ENCODE measurements at regions of chr9 and their contacts with region 1.

Region 1: GRCh38 chr9:137176302-137177182 is 4.7 kb upstream of the TMEM210 start:
- DNase-seq: peak; percentile 48
- ATAC-seq: peak; percentile 60
- H3K4me3 Mint-ChIP-seq: no peak overlapping the region
- H3K27ac Mint-ChIP-seq: peak overlapping the region; percentile 49
- H3K4me1 Mint-ChIP-seq: no peaks in the 10 kb centered on the region
- H3K27me3 Mint-ChIP-seq: peaks cover 5% of the 10 kb centered on the region
- CTCF ChIP-seq: peak; percentile 21; the same call in 1 of the 2 replicates

Region 2: DNA sequence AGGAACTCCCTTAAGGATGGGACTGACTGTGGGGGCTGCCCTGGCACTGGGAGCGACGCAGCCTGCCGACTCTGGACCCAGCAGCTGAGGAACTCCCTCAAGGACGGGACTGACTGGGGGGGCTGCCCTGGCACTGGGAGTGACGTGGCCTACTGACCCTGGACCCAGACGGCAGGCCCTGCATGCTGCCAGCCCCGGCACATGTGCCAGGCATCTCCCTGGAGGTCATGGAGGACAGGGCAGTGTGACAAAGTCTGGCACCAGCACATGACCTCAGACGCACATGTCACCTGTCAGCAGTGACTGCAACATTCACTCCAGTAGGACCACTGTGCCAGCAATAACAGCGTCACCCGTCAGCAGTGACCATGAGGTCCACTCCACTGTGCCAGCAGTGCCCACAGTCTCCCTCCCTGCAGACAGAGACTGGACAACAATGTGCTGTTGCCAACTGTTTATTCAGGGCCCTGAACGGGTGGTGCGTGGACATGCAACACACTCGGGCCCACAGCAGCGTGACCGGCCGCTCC is 236.5 kb before region 1 on chr9:
- CTCF ChIA-PET with region 1: no interaction called
- POLR2A ChIA-PET with region 1: no interaction called
- DNase-seq: no peak
- ATAC-seq: no peak
- H3K4me3 Mint-ChIP-seq: no peak overlapping the region
- H3K27ac Mint-ChIP-seq: no peak overlapping the region
- H3K4me1 Mint-ChIP-seq: peaks cover 6% of the 10 kb centered on the region
- H3K27me3 Mint-ChIP-seq: no peaks in the 10 kb centered on the region
- CTCF ChIP-seq: no peak

Region 3: DNA sequence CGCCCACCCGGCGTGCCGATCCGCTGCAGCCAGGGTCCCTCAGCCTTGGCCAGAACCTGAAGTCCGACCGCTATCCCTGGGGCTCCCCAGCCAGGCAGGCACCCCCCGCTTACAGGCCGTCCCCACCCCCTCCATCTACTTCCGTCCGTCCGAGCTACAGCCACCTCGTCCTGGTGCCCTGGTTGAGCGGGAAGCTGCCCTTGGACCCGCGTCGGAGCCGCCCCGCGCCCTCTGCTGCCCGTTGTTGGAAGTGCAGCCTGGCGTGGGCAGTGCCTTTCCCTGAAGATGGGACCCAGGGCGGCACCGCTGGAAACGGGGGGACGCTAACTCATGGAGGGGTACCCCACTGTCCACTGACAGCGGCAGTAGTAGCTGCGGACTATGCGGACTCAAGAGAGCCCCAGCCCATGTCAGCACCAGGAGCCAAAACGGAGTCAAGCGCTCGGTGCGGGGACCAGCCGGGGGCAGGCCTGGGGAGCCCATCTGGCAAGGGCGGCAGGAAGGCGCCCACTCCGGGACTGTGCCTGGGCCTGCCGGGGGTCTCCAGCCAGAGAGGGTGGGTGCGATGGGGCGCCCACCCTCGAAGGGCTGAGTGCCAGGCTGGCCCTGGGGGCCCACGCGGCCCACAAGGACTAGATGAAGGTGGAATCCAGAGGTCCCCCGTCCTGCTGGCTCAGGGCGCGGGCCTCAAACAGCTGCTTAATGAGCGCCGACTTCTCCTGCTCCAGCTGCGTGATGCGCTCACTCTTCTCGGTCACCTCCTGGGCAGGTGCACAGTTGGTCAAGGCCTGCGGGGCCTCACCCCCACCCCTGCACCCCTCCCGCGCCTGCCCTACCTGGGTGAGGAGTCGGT is 112.3 kb before region 1 on chr9:
- CTCF ChIA-PET with region 1: interaction called, 18 read pairs
- POLR2A ChIA-PET with region 1: no interaction called
- DNase-seq: peak; percentile 84
- ATAC-seq: peak; percentile 51
- H3K4me3 Mint-ChIP-seq: no peak overlapping the region
- H3K27ac Mint-ChIP-seq: no peak overlapping the region
- H3K4me1 Mint-ChIP-seq: peaks cover 12% of the 10 kb centered on the region
- H3K27me3 Mint-ChIP-seq: peaks cover 6% of the 10 kb centered on the region
- CTCF ChIP-seq: peak; percentile 99

Region 4: GRCh38 chr9:137077010-137077747 is 99.4 kb before region 1 on chr9 and contains the start of gene UAP1L1:
- CTCF ChIA-PET with region 1: no interaction called
- POLR2A ChIA-PET with region 1: no interaction called
- DNase-seq: peak; percentile 64
- ATAC-seq: peak; percentile 29
- H3K4me3 Mint-ChIP-seq: peak within 1 kb of the TSS; percentile 69
- H3K27ac Mint-ChIP-seq: no peak within 1 kb of the TSS
- H3K4me1 Mint-ChIP-seq: peaks cover 16% of the 10 kb centered on the region
- H3K27me3 Mint-ChIP-seq: peaks cover 36% of the 10 kb centered on the region
- CTCF ChIP-seq: no peak
- total RNA-seq, gene UAP1L1: 12.1 to 17.7 TPM (median 14.3 TPM) in 3 replicates

Region 5: DNA sequence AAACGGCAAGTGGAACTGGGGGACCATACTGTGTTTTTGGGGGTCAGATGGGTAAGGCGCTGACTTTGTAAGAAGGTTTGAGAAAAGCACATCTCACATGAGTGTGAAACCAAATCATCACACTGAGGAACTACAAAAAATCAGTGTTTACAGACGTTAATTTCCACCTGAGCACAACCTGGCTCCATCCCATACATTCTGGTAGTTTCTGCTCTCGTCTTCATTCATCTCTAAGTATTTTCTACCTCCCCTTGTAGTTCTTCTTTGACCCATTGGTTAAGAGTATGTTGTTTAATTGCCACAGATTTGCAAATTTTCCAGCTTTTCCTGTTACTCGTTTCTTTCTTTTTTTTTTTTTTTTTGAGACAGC is 53.1 kb before region 1 on chr9:
- CTCF ChIA-PET with region 1: interaction called, 14 read pairs
- POLR2A ChIA-PET with region 1: no interaction called
- DNase-seq: no peak
- ATAC-seq: no peak
- H3K4me3 Mint-ChIP-seq: no peak overlapping the region
- H3K27ac Mint-ChIP-seq: no peak overlapping the region
- H3K4me1 Mint-ChIP-seq: peaks cover 9% of the 10 kb centered on the region
- H3K27me3 Mint-ChIP-seq: no peaks in the 10 kb centered on the region; the same call in 1 of the 2 replicates
- CTCF ChIP-seq: no peak

Region 6: DNA sequence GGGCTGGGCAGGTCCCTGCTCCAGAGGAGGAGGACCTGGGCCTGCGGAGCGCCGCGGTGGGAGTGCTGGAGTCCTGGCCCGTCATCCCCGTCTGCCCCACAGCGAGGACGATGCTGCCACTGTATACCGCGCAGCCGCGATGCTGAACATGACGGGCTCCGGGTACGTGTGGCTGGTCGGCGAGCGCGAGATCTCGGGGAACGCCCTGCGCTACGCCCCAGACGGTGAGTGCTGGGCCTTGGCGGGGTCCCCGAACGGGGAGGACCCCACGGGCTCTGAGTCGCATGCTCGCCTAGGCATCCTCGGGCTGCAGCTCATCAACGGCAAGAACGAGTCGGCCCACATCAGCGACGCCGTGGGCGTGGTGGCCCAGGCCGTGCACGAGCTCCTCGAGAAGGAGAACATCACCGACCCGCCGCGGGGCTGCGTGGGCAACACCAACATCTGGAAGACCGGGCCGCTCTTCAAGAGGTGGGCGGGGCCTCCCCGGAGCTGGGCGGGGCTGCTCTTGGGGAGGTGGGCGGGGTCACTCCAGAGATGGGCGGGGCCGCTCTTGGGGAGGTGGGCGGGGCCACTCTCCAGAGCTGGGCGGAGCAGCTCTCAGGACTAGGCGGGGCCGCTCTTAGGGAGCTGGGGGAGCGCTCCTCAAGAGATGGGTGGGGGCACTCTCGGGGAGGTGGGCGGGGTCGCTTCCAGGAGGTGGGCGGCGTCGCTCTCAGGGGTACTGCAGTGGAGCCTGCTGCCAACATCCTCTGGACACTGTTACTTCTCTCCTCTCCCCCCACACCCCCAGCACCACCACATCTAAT is 19.8 kb before region 1 on chr9:
- CTCF ChIA-PET with region 1: interaction called, 40 read pairs
- POLR2A ChIA-PET with region 1: interaction called, 6 read pairs
- DNase-seq: peak; percentile 75
- ATAC-seq: peak; percentile 72
- H3K4me3 Mint-ChIP-seq: peak overlapping the region; percentile 64
- H3K27ac Mint-ChIP-seq: no peak overlapping the region
- H3K4me1 Mint-ChIP-seq: no peaks in the 10 kb centered on the region
- H3K27me3 Mint-ChIP-seq: peaks cover 66% of the 10 kb centered on the region
- CTCF ChIP-seq: no peak

Region 7: DNA sequence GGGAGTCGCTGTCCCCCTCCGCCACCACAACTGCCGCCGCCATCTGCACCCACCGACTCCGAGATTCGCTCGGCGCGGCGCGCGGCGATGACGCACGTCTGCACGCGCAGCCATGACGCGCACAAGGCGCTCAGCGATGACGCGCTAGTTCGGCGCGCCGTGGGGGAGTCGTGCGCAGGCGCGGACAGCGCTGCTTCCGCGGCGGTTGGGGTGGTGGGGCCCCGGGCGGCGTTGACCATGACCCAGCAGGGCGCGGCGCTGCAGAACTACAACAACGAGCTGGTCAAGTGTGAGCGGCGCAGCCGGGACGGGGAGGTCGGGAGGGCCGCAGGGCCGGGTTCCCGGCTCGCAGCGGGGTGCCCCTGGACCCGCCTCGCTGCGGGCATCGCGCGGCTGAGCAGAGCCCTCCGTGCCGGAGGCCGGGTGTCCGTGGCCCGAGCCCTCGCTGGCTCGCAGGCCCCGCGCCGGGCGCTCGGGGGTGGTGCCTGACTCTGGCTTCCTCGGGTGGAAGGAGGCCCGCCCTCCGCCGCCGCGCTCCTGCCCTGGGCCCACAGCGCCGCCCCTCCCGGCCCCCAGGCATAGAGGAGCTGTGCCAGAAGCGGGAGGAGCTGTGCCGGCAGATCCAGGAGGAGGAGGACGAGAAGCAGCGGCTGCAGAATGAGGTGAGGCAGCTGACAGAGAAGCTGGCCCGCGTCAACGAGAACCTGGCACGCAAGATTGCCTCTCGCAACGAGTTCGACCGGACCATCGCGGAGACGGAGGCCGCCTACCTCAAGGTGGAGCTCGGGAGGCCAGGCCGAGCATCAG is 12.2 kb after region 1 on chr9 and contains the starts of genes ANAPC2 and SSNA1:
- CTCF ChIA-PET with region 1: interaction called, 24 read pairs
- POLR2A ChIA-PET with region 1: interaction called, 3 read pairs
- DNase-seq: peak; percentile 92
- ATAC-seq: peak; percentile 84
- H3K4me3 Mint-ChIP-seq: peak within 1 kb of the TSS; percentile 92
- H3K27ac Mint-ChIP-seq: peak within 1 kb of the TSS; percentile 94
- H3K4me1 Mint-ChIP-seq: peaks cover 20% of the 10 kb centered on the region
- H3K27me3 Mint-ChIP-seq: no peaks in the 10 kb centered on the region; the same call in 1 of the 2 replicates
- CTCF ChIP-seq: no peak
- total RNA-seq, gene ANAPC2: 61.0 to 80.9 TPM (median 61.2 TPM) in 3 replicates
- total RNA-seq, gene SSNA1: 102 to 105 TPM (median 103 TPM) in 3 replicates

Region 8: GRCh38 chr9:137223078-137223970 is 46.8 kb after region 1 on chr9:
- CTCF ChIA-PET with region 1: interaction called, 39 read pairs
- POLR2A ChIA-PET with region 1: interaction called, 3 read pairs
- DNase-seq: peak; percentile 97
- ATAC-seq: peak; percentile 73
- H3K4me3 Mint-ChIP-seq: peak overlapping the region; percentile 77
- H3K27ac Mint-ChIP-seq: no peak overlapping the region
- H3K4me1 Mint-ChIP-seq: peaks cover 3% of the 10 kb centered on the region
- H3K27me3 Mint-ChIP-seq: no peaks in the 10 kb centered on the region
- CTCF ChIP-seq: no peak

Measured in WTC11 (cell line).